ENCODE measurements at regions of chr18 and their contacts with region 1.

Region 1: GRCh38 chr18:42976869-42977590 is 138.5 kb downstream of the RIT2 start:
- DNase-seq: no peak
- ATAC-seq: no peak
- H3K4me3 ChIP-seq: no peak overlapping the region
- H3K27ac ChIP-seq: no peak overlapping the region
- H3K4me1 ChIP-seq: no peaks in the 10 kb centered on the region
- H3K27me3 ChIP-seq: peaks cover 0 to 4% (median 0%) of the 10 kb centered on the region in 4 donors
- CTCF ChIP-seq: no peak

Region 2: DNA sequence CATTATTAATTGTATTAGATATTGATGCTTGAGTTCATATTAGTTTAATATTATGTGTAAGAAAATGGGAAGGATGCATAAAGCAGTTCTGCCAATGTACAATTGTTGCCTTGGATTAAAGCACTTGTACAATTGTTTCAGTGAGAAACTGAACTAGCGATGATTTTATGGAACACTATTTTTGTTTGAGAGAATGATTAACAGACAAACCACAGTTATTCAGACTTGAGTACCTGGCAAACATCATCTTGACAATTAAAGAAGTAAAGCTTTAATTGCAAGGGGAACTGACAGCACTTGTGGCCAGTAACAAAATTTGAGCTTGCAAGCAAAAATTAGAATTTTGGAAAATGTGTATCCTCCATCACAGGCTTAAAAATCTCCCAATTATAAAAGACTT is 75.9 kb before region 1 on chr18:
- intact Hi-C with region 1: no loop called
- DNase-seq: no peak
- ATAC-seq: no peak
- H3K4me3 ChIP-seq: no peak overlapping the region
- H3K27ac ChIP-seq: no peak overlapping the region
- H3K4me1 ChIP-seq: no peaks in the 10 kb centered on the region
- H3K27me3 ChIP-seq: no peaks in the 10 kb centered on the region
- CTCF ChIP-seq: no peak

Region 3: DNA sequence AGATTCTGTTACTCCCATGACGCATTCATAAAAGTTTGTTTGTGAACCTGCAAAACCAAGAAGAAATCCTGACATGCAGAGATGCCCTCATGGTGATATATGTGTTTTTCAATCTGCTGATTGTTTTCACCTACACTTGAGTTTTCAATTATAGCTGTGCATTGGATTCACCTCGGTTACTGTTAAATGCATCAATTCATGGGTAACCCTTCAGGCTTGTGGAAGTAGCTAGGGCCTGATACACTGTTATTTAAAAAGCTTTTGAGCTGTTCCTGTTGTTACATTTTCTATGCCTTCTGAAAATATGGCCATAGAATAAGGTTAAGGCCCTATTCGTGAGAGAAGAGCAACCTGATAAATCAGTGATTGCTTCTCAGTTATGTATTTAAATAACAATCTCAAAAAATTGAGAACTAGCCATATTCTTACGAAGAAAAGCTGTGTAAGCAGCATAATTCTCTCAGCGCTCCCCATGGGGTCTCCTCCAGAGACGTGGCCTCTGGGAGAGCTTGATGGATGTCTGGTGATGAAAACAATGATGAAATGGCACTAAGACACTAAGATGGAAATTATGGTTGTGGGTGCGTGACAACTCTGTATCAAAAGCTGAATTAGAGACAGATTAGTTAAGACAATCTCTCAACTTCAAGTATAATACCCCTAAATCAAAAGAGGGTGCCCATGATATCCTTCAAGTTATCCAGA is 77.9 kb after region 1 on chr18:
- intact Hi-C with region 1: loop called in 1 of 3 experiments (anchors 10 kb)
- DNase-seq: no peak
- ATAC-seq: no peak
- H3K4me3 ChIP-seq: no peak overlapping the region
- H3K27ac ChIP-seq: no peak overlapping the region
- H3K4me1 ChIP-seq: no peaks in the 10 kb centered on the region
- H3K27me3 ChIP-seq: no peaks in the 10 kb centered on the region
- CTCF ChIP-seq: no peak

Region 4: DNA sequence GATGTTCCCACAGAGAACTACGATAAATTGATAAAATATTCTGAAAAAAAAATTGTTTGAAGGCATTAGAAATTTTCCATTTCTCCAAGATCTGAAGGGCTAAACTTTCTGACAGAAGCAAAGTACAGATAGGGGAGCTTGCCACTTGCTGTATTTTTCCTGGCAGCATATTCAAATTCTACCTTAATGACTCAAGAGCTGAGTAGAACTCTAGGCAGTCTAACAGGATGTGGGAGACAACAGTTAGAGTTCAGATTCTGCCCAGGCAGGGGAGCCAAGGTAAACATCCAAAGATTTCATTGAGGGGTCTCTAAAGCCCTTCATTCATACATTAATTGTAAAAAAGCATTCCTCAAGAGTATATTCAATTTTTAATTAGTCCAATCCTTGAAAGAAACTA is 184.5 kb after region 1 on chr18:
- intact Hi-C with region 1: no loop called
- DNase-seq: no peak
- ATAC-seq: no peak
- H3K4me3 ChIP-seq: no peak overlapping the region
- H3K27ac ChIP-seq: no peak overlapping the region
- H3K4me1 ChIP-seq: no peaks in the 10 kb centered on the region
- H3K27me3 ChIP-seq: no peaks in the 10 kb centered on the region
- CTCF ChIP-seq: no peak

Region 5: DNA sequence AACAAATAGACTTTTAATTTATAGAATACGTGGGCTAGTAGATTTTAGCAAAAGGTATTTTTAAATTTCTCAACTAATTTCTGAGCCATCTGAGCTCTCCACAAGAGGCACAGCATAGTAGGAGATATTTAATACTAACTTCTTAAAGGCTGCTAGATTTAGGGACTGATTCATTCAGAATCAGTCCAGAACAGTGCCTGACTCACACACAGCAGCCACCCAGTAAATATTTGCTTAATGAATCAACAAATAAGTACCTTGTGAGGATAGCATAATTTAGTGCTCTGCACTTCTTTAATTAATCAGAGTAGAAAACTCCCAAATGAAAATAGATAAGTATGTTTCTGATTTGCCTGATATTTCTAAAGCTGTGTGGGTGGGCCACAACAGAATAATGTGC is 335.9 kb after region 1 on chr18:
- intact Hi-C with region 1: no loop called
- DNase-seq: no peak
- ATAC-seq: no peak
- H3K4me3 ChIP-seq: no peak overlapping the region
- H3K27ac ChIP-seq: no peak overlapping the region
- H3K4me1 ChIP-seq: no peaks in the 10 kb centered on the region
- H3K27me3 ChIP-seq: no peaks in the 10 kb centered on the region
- CTCF ChIP-seq: no peak